ENCODE measurements at regions of chr14 and their contacts with region 1.

Region 1: DNA sequence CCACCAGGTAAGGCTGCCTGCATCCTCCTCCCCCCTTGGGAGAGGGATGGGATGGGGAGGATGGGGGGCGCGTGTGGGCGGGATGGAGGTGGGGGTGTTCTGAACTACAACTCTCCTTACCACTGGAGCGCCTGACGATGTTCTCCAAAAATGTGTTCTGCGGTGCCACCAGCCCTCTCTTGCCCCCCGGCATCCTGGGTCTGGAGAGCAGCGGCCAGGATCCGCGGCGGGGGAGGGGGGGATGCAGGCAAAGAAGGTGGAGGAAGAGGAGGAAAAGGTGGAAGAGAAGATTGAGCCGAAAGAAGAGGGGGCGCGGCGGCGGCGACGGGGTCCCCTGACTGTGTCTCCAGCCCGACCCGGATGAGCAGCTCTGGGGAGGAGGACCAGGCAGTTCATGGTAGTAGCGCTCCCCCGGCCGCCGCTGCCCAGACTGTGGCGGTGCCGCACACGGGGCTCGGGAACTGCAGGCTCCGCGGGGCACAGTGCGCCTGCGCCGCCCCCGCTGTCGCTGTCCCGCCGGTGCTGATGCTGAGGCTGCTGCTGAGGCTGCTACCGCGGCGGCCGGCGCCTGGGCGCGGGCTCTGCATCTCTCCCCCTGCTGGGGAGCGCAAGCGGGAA is at the start of gene KCNH5:
- DNase-seq: no peak
- H3K4me3 Mint-ChIP-seq: peak within 1 kb of the TSS; percentile 57
- H3K27ac Mint-ChIP-seq: no peak within 1 kb of the TSS
- H3K4me1 Mint-ChIP-seq: no peaks in the 10 kb centered on the region
- H3K27me3 Mint-ChIP-seq: peaks cover 24% of the 10 kb centered on the region
- CTCF ChIP-seq: no peak
- total RNA-seq, gene KCNH5: not detected in 2 replicates

Region 2: DNA sequence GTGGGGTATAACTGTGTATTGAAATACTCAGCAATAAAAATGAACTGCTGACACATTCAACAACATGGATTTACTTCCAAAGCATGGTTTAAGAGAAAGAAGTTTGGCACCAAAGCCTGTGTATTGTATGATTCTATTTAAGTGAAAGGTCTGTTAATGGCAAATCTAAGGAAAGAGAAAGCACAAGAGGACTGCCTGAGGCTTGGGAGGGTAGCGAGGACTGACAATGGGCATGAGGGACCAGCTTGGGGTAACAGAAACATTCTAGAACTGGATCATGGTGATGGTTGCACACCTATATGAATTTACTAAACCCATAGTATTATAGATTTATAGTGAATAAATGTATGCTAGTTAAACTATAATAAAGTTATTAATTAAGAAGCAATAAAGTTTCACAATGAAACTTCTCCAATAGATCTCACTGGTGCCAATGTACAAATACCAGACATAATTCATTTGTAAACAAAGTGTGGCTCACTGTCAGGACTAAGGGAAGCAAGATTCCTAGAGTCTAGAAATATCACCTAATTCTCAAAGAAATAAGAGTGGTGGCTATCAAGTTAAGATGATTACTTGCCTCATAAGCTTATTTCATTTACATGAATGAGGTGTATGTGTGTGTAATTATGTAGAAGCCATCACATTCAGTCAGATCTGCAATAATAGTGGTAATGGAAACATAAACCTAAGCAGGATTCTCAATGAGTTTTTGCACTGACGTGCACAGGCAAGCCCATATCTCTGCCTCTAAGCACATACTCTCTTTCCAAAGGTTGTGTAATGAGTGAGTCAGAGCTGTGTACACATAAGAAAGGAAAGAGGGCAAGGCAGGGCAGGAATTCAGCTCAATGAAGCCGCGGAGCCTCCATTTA is 353.3 kb before region 1 on chr14:
- CTCF ChIA-PET with region 1: no interaction called
- POLR2A ChIA-PET with region 1: no interaction called
- intact Hi-C with region 1: loop called (anchors 10 kb)
- DNase-seq: peak; percentile 97
- H3K4me3 Mint-ChIP-seq: peak overlapping the region; percentile 38
- H3K27ac Mint-ChIP-seq: peak overlapping the region; percentile 97
- H3K4me1 Mint-ChIP-seq: peaks cover 33% of the 10 kb centered on the region
- H3K27me3 Mint-ChIP-seq: no peaks in the 10 kb centered on the region
- CTCF ChIP-seq: no peak

Region 3: GRCh38 chr14:63096186-63096585 is 51.1 kb after region 1 on chr14:
- CTCF ChIA-PET with region 1: no interaction called
- POLR2A ChIA-PET with region 1: no interaction called
- intact Hi-C with region 1: no loop called
- DNase-seq: no peak
- H3K4me3 Mint-ChIP-seq: no peak overlapping the region
- H3K27ac Mint-ChIP-seq: no peak overlapping the region
- H3K4me1 Mint-ChIP-seq: no peaks in the 10 kb centered on the region
- H3K27me3 Mint-ChIP-seq: no peaks in the 10 kb centered on the region
- CTCF ChIP-seq: no peak

Measured in MCF 10A (cell line).